Endothelial cell of umbilical vein (primary cell): ENCODE measurements at regions of chr16 and their contacts with region 1.

Region 1: DNA sequence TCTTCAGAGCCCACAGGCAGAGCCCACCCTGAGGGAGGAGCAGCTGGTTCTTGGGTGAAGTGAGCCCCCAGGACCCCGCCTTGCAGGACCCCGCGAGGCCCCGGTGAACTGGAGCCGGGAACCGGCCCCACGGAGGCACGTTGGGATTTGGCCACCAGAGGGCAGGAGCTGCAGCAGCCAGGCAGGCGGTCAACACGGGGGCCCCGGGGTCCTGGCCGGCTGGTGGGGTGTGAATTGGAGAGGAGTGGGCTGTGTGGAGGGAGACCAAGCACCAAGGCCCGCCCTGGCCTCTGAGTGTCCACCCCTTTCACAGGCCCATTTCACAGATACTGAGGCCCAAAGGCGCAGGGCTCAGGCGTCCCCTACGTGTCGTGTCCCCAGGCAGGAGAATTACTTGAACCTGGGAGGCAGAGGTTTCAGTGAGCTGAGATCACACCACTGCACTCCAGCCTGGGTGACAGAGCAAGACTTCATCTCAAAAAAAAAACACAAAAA is 2.2 kb downstream of the DPEP1 start:
- DNase-seq: no peak
- H3K4me3 ChIP-seq: no peak overlapping the region
- H3K27ac ChIP-seq: no peak overlapping the region
- H3K4me1 ChIP-seq: peaks cover 2% of the 10 kb centered on the region
- H3K27me3 ChIP-seq: no peaks in the 10 kb centered on the region
- CTCF ChIP-seq: peak; percentile 80 to 85
- POLR2A ChIP-seq: no peak

Region 2: DNA sequence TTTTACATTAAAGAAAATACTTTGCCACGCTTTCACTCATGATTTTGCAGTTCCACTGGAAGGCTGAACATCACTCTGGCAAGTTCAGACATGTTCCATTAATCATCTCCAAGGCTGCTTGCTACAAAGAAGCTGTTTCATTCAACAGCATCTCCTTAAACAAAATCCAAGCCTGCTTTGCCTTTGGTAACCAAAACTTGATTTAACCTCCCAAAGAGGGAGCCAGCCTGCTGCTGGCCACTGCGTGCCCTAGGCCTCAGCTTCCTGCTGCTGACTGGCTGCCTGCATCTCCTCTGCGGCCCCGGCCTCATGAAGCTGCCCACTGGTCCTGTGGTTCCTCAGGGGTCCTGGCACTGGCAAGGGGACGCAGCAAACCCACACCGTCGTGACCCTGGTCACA is 157.1 kb before region 1 on chr16:
- CTCF ChIA-PET with region 1: no interaction called
- POLR2A ChIA-PET with region 1: no interaction called
- dilution Hi-C with region 1: no loop called
- intact Hi-C with region 1: no loop called
- DNase-seq: no peak
- H3K4me3 ChIP-seq: no peak overlapping the region
- H3K27ac ChIP-seq: peak overlapping the region; percentile 8
- H3K4me1 ChIP-seq: peaks cover 20% of the 10 kb centered on the region
- H3K27me3 ChIP-seq: no peaks in the 10 kb centered on the region
- CTCF ChIP-seq: no peak
- POLR2A ChIP-seq: no peak

Region 3: DNA sequence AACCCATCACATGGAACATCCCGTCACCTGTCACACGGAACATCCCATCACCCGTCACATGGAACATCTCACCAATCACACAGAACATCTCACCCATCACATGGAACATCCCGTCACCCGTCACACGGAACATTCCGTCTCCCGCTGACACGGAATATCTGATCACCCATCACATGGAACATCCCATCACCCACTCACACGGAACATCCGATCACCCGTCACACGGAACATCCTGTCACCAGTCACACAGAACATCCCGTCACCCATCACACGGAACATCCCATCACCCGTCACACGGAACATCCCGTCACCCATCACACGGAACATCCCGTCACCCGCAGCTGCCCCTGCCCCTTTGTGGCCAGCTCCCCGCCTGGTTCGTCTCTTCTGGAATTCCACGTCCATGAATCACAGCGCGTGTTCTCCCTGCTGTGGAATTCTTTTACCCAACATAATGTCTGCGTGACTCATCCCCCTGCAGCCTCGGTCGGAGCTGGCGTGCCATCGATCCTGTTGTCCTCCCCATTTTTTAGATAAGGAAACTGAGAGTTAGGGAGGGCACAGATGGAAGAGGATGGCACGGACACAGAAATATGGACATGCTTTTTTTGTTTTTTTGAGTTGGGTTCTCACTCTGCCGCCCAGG is 34.5 kb before region 1 on chr16:
- CTCF ChIA-PET with region 1: interaction called, 10 read pairs
- POLR2A ChIA-PET with region 1: no interaction called
- dilution Hi-C with region 1: no loop called
- intact Hi-C with region 1: loop called (anchors 5 kb)
- DNase-seq: peak; percentile 74
- H3K4me3 ChIP-seq: no peak overlapping the region
- H3K27ac ChIP-seq: peak overlapping the region; percentile 53
- H3K4me1 ChIP-seq: peaks cover 18% of the 10 kb centered on the region
- H3K27me3 ChIP-seq: peaks cover 0 to 1% of the 10 kb centered on the region in 2 experiments
- CTCF ChIP-seq: no peak
- POLR2A ChIP-seq: no peak

Region 4: GRCh38 chr16:89602273-89602951 is 13.2 kb before region 1 on chr16:
- CTCF ChIA-PET with region 1: interaction called, 48 read pairs
- POLR2A ChIA-PET with region 1: no interaction called
- dilution Hi-C with region 1: no loop called
- intact Hi-C with region 1: no loop called
- DNase-seq: peak; percentile 75
- H3K4me3 ChIP-seq: no peak overlapping the region
- H3K27ac ChIP-seq: no peak overlapping the region
- H3K4me1 ChIP-seq: peaks cover 11% of the 10 kb centered on the region
- H3K27me3 ChIP-seq: no peaks in the 10 kb centered on the region
- CTCF ChIP-seq: no peak
- POLR2A ChIP-seq: no peak

Region 5: DNA sequence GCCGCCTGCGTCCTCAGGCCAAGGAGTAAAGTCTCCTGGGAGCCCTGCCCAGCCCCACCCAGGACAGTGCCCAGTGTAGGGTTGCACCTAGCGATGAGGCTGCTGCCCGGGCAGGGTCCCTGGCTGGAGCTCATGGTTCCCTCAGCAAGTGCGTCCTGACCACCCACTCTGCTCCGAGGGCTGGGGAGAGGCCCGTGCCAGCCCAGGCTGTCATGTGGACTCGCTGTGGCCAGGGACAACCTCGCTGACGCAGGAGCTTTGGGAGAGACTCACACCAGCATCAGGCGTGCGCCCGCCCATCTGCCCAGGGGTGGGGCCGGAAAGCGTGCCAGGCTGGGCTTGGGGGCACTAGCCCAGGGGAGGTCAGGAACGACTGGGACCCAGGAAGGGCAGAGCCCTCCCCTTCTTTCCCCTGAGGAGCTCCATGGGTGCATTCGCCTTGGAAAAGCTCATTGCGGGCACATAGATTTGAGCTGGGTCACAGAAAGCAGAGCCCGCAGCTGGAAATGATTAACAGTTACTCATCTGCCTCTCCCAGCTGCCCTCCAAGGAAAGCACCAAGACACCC is 17.5 kb after region 1 on chr16:
- CTCF ChIA-PET with region 1: interaction called, 18 read pairs
- POLR2A ChIA-PET with region 1: no interaction called
- dilution Hi-C with region 1: no loop called
- intact Hi-C with region 1: no loop called
- DNase-seq: no peak
- H3K4me3 ChIP-seq: no peak overlapping the region
- H3K27ac ChIP-seq: no peak overlapping the region
- H3K4me1 ChIP-seq: no peaks in the 10 kb centered on the region
- H3K27me3 ChIP-seq: peaks cover 0 to 10% of the 10 kb centered on the region in 2 experiments
- CTCF ChIP-seq: no peak
- POLR2A ChIP-seq: no peak

Region 6: DNA sequence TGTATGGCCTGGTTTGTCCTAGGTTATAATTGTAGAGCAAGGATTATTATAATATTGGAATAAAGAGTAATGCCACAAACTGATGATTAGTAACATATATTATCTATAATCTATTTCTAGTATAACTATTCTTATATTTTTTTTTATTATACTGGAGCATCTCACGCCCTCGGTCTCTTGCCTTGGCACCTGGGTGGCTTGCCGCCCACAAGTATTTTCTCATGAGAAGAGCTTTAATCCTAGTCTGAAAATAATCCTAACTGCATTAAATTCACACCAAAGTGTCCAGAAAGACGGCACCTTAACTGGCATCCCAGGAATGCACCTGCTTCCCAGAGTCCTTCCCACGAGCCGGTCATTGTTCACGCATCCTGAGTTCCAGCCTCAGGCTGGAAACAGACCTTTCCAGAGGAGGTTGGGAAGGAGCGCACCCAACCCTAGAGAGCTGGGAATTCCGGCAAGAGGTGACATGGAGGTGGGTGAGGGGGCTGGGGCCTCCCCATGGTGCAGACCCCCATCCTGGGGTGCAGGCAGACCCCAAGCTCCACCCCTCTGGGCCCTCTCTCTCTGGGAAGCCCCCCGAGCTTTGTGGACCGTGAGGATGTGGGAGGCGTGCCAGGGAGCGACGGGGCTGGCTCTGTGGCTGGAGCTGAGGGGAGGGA is 25.9 kb after region 1 on chr16:
- CTCF ChIA-PET with region 1: interaction called, 28 read pairs
- POLR2A ChIA-PET with region 1: no interaction called
- dilution Hi-C with region 1: no loop called
- intact Hi-C with region 1: loop called (anchors 1 kb)
- DNase-seq: no peak
- H3K4me3 ChIP-seq: no peak overlapping the region
- H3K27ac ChIP-seq: no peak overlapping the region
- H3K4me1 ChIP-seq: no peaks in the 10 kb centered on the region
- H3K27me3 ChIP-seq: no peaks in the 10 kb centered on the region
- CTCF ChIP-seq: no peak
- POLR2A ChIP-seq: no peak

Region 7: DNA sequence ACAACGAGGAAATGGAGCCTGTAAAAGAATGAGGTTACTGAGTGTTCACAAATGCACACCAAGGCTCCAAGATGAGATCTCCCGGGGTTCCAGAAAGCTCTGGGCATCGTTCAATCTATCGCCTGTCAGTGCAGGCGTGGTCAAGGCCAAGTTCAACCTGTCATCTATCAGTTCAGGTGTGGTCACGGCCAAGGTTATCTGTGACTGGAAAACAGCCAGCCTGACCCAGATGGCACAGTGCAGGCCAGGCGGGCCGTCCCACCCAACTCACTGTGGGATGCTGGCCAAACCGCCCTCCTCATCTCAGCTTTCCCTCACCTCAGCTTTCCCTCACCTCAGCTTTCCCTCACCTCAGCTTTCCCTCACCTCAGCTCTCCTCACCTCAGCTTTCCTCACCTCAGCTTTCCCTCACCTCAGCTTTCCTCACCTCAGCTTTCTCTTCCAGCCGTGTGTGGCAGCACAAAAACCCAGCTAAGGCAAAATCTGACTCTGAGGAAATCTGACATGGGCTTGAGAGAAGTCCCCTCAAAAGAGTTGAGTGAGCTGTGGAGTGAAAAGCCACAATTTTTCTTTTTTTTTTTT is 39.5 kb after region 1 on chr16:
- CTCF ChIA-PET with region 1: interaction called, 11 read pairs
- POLR2A ChIA-PET with region 1: interaction called, 8 read pairs
- dilution Hi-C with region 1: no loop called
- intact Hi-C with region 1: no loop called
- DNase-seq: no peak
- H3K4me3 ChIP-seq: no peak overlapping the region
- H3K27ac ChIP-seq: no peak overlapping the region
- H3K4me1 ChIP-seq: peaks cover 13% of the 10 kb centered on the region
- H3K27me3 ChIP-seq: no peaks in the 10 kb centered on the region
- CTCF ChIP-seq: no peak
- POLR2A ChIP-seq: no peak

Region 8: DNA sequence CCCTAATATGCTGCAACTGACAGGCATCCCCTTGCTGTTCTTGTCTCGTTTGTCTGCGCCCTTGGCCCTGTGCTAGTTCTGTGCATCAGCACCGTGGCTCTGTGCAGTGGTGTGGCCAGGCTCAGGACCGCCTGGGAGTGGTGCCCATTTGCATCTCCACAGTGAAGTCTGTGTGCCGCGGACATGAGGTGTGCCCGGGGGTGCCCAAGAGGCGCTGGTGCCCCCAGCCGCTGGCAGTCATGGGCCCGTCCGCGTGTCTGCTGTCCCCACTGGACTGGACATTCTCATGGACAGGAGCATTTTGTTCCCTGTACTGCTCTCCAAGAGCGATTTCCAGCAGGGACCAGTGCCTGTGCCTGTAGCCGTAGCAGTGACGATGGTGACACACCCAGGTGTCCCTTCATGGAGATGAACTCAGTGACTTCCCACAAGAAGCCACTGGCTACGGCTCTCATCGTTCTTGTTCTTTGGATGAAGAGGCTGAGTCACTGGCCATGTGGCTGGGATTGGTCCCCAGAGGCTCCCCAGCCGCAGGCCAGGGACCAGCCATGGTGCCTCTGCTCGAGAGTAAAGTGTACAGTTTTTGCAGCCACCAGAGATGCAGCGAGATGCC is 289.9 kb after region 1 on chr16:
- CTCF ChIA-PET with region 1: no interaction called
- POLR2A ChIA-PET with region 1: no interaction called
- dilution Hi-C with region 1: no loop called
- intact Hi-C with region 1: no loop called
- DNase-seq: no peak
- H3K4me3 ChIP-seq: no peak overlapping the region
- H3K27ac ChIP-seq: no peak overlapping the region
- H3K4me1 ChIP-seq: peaks cover 3% of the 10 kb centered on the region
- H3K27me3 ChIP-seq: no peaks in the 10 kb centered on the region
- CTCF ChIP-seq: no peak
- POLR2A ChIP-seq: peak; percentile 12